CD4-positive, alpha-beta memory T cell (primary cell): ENCODE measurements at regions of chr1 and their contacts with region 1.

Region 1: DNA sequence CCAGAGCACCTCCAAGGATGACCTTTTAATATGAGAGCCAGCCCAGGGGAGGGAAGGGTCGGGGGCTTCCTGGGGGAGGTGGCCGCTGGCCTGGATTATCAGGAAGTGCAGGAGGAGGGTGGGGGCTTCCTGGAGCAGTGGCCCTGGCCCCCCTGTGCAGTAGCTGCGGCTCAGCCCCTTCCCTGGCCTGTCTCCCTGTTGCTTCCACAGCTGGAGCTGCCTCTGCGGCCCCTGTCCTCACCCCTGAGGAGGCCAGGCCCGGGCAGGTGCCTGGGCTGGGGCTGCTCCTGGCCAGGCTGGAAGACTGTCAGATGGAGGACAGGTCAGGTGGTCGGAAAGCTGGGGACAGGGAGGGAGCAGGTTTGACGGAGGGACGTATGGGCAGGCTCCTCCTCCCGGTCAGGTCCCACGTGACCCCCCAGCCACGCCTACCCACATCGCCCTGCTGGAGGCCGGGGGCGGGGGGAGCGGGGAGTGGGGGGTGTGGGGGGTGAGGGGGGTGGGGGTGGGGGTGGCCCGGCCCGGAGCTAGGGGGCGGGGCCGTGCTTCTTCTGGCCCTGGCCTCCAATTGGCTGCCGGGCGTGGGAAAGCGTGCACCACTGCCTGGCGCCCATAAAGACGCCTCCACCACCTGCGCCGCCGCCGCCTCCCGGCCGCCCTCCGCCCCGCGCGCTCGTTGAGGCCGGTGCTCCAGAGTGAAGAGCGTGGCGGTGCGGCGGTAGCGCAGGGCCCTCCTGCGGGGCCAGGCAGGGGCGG is 10.2 kb upstream of the TNFRSF14 start:
- DNase-seq: peak; percentile 89 to 92 (median 90)
- H3K4me3 ChIP-seq: peak overlapping the region; percentile 78 to 80
- H3K4me3 Mint-ChIP-seq: peak overlapping the region; percentile 43 to 97 (median 92)
- H3K27ac ChIP-seq: peak overlapping the region; percentile 98
- H3K27ac Mint-ChIP-seq: peak overlapping the region in 6 of 7 donors; percentile 9 to 99 (median 97)
- H3K4me1 ChIP-seq: peaks cover 48% of the 10 kb centered on the region
- H3K4me1 Mint-ChIP-seq: peaks cover 8 to 39% (median 20%) of the 10 kb centered on the region in 4 donors
- H3K27me3 ChIP-seq: no peaks in the 10 kb centered on the region
- H3K27me3 Mint-ChIP-seq: peaks cover 0 to 1% of the 10 kb centered on the region in 2 donors

Region 2: DNA sequence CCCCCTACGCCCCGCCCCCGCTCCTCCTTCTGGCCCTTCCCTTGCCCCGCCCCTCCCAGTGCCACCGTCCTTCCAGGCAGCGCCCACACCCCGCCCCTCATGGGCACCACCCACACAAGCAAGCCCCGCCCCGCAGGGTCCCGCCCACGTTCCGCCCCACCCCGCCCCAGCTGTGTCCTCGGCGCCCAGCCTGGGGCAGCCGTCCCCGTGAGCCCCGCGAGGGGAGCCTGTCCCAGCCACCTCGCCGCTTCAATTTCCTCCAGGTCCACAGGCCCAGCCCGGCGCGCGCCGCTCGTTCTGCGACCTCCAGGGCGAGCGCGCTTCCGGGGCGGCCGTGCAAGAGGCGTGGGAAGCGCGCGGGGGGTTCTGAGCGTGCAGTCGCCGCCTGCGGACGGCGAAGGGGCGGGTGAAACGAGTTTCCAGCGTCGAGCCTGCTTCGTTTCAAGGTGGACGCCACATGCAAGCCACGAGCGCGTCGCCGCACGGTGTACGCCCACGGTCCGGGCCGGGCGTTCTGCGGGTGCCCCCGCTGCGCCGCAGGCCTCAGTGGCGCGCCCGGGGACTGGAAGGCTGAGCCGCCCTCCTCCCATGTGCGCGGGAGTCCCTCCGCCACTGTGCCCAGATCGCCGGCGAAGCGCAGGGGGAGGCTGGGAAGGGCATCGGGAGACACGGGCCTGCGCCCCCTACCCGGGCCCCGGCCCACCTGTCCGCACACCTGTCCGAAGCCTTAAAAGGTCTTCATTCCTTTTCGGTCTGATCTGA is 340.6 kb before region 1 on chr1:
- CTCF ChIA-PET with region 1: interaction called, 3 read pairs
- POLR2A ChIA-PET with region 1: no interaction called
- intact Hi-C with region 1: loop called (anchors 2 kb)
- DNase-seq: peak; percentile 90 to 95 (median 91)
- H3K4me3 ChIP-seq: peak overlapping the region; percentile 6 to 47
- H3K4me3 Mint-ChIP-seq: peak overlapping the region; percentile 48 to 71 (median 68)
- H3K27ac ChIP-seq: peak overlapping the region; percentile 38
- H3K27ac Mint-ChIP-seq: peak overlapping the region in 3 of 7 donors; percentile 35 to 79 (median 62)
- H3K4me1 ChIP-seq: peaks cover 26% of the 10 kb centered on the region
- H3K4me1 Mint-ChIP-seq: peaks cover 0 to 15% (median 3%) of the 10 kb centered on the region in 4 donors
- H3K27me3 ChIP-seq: no peaks in the 10 kb centered on the region
- H3K27me3 Mint-ChIP-seq: no peaks in the 10 kb centered on the region

Region 3: DNA sequence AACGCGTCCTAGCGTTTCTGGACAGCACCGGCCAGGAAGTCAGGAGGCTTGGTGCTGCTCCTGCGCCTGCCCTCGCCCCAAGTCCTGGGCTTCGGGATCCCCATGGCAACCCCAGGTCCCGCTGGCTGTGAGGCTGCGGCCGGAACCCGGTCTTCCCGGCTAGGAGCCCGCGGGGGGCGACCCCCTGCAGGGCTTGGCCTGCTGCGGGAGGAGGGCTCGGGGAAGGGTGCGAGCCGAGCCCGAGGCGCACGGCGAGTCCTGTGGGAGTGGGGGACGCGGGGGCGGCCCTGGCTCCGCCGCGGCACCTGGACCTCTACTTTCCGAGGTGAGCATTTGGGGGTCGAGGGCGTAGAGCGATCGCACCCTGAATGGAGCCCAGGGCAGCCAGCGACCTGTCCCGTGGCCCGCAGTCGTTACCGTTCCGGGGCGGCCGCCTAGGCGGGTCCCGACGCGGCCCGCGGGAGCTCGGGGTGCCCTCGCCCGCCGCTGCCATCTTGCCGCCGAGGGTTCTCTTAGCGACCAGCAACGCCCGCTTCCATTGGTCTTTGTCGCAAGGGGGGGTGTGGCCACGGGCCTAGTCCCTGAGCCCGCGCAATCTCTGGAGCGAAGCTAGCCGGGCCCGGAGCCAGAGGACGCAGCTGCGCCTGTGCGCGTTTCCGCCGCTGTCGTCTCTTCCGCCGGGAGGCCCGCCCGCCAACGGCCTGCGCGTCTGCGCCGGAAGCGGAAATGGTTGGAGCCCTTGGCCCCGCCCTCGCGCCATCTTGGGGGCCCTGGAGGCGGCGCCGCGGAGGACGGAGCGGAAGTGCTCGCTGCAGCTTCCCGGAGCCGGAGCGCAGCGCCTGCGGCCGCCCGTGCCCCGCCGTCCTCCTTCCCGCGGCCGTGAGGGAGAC is 154.7 kb before region 1 on chr1 and contains the starts of genes MORN1 and RER1:
- CTCF ChIA-PET with region 1: interaction called, 8 read pairs
- POLR2A ChIA-PET with region 1: interaction called, 9 read pairs
- intact Hi-C with region 1: loop called (anchors 1 kb)
- DNase-seq: peak; percentile 98 to 100 (median 99)
- H3K4me3 ChIP-seq: peak within 1 kb of the TSS; percentile 57 to 75
- H3K4me3 Mint-ChIP-seq: peak within 1 kb of the TSS; percentile 85 to 93 (median 90)
- H3K27ac ChIP-seq: peak within 1 kb of the TSS; percentile 76
- H3K27ac Mint-ChIP-seq: peak within 1 kb of the TSS; percentile 87 to 95 (median 93)
- H3K4me1 ChIP-seq: peaks cover 37% of the 10 kb centered on the region
- H3K4me1 Mint-ChIP-seq: peaks cover 20 to 49% (median 38%) of the 10 kb centered on the region in 4 donors
- H3K27me3 ChIP-seq: no peaks in the 10 kb centered on the region
- H3K27me3 Mint-ChIP-seq: no peaks in the 10 kb centered on the region
- total RNA-seq, gene MORN1: 12.5 to 15.3 TPM
- total RNA-seq, gene RER1: 149 to 151 TPM

Region 4: GRCh38 chr1:2480986-2481364 is 65.0 kb before region 1 on chr1:
- CTCF ChIA-PET with region 1: no interaction called
- POLR2A ChIA-PET with region 1: no interaction called
- intact Hi-C with region 1: no loop called
- DNase-seq: no peak
- H3K4me3 ChIP-seq: no peak overlapping the region
- H3K4me3 Mint-ChIP-seq: no peak overlapping the region
- H3K27ac ChIP-seq: no peak overlapping the region
- H3K27ac Mint-ChIP-seq: peak overlapping the region in 1 of 7 donors; percentile 61
- H3K4me1 ChIP-seq: no peaks in the 10 kb centered on the region
- H3K4me1 Mint-ChIP-seq: peaks cover 2 to 5% (median 4%) of the 10 kb centered on the region in 4 donors
- H3K27me3 ChIP-seq: no peaks in the 10 kb centered on the region
- H3K27me3 Mint-ChIP-seq: no peaks in the 10 kb centered on the region

Region 5: DNA sequence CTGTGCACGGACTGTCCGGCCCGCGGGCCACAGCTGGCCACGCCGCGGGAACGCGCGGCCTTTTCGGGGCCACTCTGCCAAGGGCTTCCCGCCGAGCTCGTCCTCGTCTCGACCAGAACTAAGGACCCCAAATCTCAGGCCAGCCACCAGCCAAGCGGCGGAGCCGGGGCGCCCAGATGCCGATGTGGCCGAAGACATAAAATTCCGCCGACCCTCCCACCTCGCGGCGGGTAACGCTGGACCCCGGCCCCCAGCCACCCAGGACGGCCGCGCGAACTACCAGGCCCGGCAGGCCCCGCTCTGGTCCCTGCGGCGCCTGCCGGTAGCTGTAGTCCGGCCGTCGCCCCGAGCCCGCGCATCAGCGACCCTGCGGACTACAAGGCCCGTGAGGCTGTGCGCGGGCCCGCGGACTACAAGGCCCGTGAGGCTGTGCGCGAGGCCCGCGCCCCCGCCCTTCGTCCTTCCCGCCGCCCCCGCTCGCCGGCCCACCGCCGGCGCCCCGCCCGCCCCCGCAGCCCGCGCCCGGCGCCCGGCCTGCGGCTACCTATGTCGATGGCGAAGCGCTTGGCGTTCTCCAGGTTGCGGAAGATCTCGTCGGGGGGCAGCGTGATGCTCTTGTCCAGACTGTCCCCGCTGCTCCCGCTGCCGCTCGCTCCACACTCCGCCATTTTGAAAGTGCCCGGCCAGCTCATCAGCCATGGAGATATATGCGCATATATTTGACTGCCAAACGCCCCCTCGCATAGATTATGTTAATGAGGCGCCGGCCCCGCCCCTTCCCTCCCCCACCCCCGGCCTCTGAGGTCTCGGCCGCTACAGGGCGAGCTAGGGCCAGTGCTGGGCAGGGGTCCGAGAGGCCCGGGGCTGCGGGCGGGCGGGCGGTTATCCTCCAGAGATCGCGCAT is 19.8 kb before region 1 on chr1 and contains the start of gene PANK4:
- CTCF ChIA-PET with region 1: interaction called, 40 read pairs
- POLR2A ChIA-PET with region 1: interaction called, 367 read pairs
- intact Hi-C with region 1: loop called (anchors 1 kb)
- DNase-seq: peak; percentile 86 to 90 (median 89)
- H3K4me3 ChIP-seq: peak within 1 kb of the TSS; percentile 31 to 96
- H3K4me3 Mint-ChIP-seq: peak within 1 kb of the TSS; percentile 89 to 97 (median 95)
- H3K27ac ChIP-seq: peak within 1 kb of the TSS; percentile 86
- H3K27ac Mint-ChIP-seq: peak within 1 kb of the TSS; percentile 86 to 98 (median 97)
- H3K4me1 ChIP-seq: peaks cover 64% of the 10 kb centered on the region
- H3K4me1 Mint-ChIP-seq: peaks cover 27 to 63% (median 47%) of the 10 kb centered on the region in 4 donors
- H3K27me3 ChIP-seq: peaks cover 9% of the 10 kb centered on the region
- H3K27me3 Mint-ChIP-seq: peaks cover 5 to 11% of the 10 kb centered on the region in 2 donors
- total RNA-seq, gene PANK4: 88.9 to 93.7 TPM

Region 6: GRCh38 chr1:2575801-2576663 is 30.1 kb after region 1 on chr1:
- CTCF ChIA-PET with region 1: interaction called, 14 read pairs
- POLR2A ChIA-PET with region 1: interaction called, 64 read pairs
- intact Hi-C with region 1: no loop called
- DNase-seq: peak in 1 of 5 donors; percentile 28
- H3K4me3 ChIP-seq: no peak overlapping the region
- H3K4me3 Mint-ChIP-seq: peak overlapping the region in 3 of 8 donors; percentile 16 to 59 (median 30)
- H3K27ac ChIP-seq: peak overlapping the region; percentile 99
- H3K27ac Mint-ChIP-seq: peak overlapping the region in 6 of 7 donors; percentile 13 to 98 (median 70)
- H3K4me1 ChIP-seq: peaks cover 47% of the 10 kb centered on the region
- H3K4me1 Mint-ChIP-seq: peaks cover 16 to 59% (median 32%) of the 10 kb centered on the region in 4 donors
- H3K27me3 ChIP-seq: no peaks in the 10 kb centered on the region
- H3K27me3 Mint-ChIP-seq: no peaks in the 10 kb centered on the region

Region 7: DNA sequence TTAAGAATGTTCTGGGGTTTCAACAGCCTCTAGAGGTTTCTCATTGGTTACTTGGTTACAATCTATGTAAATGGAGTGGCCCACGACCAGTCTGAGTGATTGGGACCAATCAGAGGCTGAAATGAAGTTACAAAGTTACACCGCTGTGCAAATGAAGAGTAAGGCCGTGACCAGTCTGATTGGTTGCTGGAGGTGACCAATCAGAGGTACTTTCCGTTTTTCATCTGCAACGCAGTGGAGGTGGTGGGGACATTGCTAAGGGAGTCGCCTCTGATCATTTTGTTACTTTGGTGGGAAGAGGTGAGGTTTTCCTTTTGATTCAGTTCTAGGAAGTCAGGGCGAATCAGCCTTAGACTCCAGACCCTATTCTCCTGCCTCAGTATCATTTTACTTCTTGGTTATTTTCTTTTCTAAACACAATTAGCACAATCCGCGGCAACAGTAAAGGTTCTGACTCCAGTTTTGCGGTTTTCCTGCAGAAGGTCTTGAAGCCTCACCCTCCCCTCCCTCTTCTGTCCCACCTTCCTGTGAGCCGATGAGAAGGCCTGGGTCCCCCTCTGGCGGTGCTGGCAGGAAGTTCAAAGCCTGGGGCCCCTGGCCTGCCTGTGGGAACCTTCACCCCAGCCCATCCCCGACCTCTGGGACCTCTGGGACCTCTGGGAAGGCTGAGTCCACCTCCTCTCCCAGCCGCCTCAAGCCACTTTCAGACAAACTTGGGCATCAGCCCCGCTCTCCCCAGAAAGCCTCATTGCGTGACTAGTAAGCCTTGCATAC is 294.3 kb after region 1 on chr1:
- CTCF ChIA-PET with region 1: no interaction called
- POLR2A ChIA-PET with region 1: no interaction called
- intact Hi-C with region 1: loop called (anchors 5 kb)
- DNase-seq: peak; percentile 66 to 78 (median 74)
- H3K4me3 ChIP-seq: no peak overlapping the region
- H3K4me3 Mint-ChIP-seq: peak overlapping the region; percentile 72 to 85 (median 81)
- H3K27ac ChIP-seq: peak overlapping the region; percentile 18
- H3K27ac Mint-ChIP-seq: peak overlapping the region; percentile 81 to 94 (median 85)
- H3K4me1 ChIP-seq: peaks cover 19% of the 10 kb centered on the region
- H3K4me1 Mint-ChIP-seq: peaks cover 17 to 23% (median 20%) of the 10 kb centered on the region in 4 donors
- H3K27me3 ChIP-seq: no peaks in the 10 kb centered on the region
- H3K27me3 Mint-ChIP-seq: peaks cover 0 to 3% of the 10 kb centered on the region in 2 donors